Endothelial cell of umbilical vein (primary cell): ENCODE measurements at regions of chr14 and their contacts with region 1.

Region 1: DNA sequence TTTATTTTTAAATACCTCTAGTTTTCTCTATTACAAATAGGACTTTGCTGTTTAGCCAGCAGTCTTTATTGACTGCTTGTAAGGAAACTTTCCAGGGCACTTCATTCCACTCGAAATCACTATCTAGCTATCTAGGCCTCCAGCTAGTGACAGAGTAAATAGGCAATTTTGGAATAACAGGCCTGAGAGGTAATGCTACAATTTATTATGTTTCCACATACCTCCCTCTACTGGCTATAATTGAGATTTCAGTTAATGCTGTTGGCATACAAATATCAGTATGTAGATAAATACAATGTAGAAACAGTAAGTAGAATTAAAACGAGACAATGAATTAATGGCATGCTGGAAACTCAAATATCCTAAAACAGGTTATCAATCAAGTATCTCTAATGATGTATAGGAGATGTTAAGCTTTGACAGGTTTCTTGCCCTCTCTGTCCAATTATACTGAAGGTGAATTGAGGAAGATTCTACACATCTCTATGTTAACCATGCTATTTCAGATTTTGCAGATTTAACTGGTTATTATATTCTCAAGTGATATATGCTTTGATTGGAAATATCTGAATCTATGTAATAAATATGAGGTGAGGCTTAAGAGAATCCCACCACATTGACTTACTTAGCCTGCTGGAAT is 7.2 kb downstream of the DTD2 start:
- DNase-seq: peak; percentile 66
- H3K4me3 ChIP-seq: no peak overlapping the region
- H3K27ac ChIP-seq: no peak overlapping the region
- H3K4me1 ChIP-seq: peaks cover 10% of the 10 kb centered on the region
- H3K27me3 ChIP-seq: no peaks in the 10 kb centered on the region
- CTCF ChIP-seq: peak; percentile 21 to 42
- POLR2A ChIP-seq: no peak

Region 2: DNA sequence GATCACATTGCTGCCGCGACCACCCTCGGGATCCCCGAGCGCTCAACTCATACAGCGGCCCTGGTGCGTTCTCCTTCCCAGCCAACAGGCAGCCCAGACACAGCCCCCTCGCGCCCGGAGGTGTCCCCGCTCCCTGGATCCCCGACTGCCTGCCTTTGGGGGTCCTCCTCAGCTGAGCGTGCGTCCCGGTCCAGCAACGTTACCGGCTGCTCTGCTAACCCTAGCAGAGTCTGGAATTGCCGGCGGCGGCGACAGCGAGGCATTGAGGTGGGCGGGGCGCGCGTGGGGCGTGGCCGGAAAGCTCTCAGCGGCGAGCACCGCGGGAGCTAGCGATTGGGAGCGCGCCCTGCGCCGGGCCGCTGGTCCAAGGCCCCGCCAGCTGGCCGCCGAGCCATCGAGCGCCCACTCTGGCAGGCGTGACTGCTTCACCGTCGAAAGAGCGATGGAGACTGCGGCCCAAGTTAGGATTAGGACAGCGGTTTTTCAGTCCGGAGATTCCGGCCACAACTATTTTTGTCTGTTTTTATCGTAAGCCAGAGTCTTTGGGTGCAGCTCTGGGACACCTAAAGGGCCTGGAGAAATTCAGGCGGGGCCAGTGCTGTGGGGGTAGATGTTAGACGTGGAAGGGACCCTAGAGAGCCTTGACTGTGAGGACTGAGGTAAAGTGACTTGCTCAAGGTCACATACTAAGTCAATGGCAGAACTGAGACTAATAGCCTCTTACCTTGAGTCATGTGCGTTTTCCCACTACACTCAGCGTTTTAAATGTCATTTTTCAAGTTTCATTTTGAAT is 29.6 kb before region 1 on chr14 and contains the start of gene HEATR5A:
- CTCF ChIA-PET with region 1: interaction called, 15 read pairs
- POLR2A ChIA-PET with region 1: interaction called, 14 read pairs
- dilution Hi-C with region 1: no loop called
- intact Hi-C with region 1: no loop called
- DNase-seq: peak; percentile 96
- H3K4me3 ChIP-seq: peak within 1 kb of the TSS; percentile 83 to 86 (median 83)
- H3K27ac ChIP-seq: peak within 1 kb of the TSS; percentile 60
- H3K4me1 ChIP-seq: peaks cover 13% of the 10 kb centered on the region
- H3K27me3 ChIP-seq: no peaks in the 10 kb centered on the region
- CTCF ChIP-seq: peak in 1 of 2 donors; percentile 27
- POLR2A ChIP-seq: peak; percentile 99
- total RNA-seq, gene HEATR5A: 37.0 and 45.3 TPM in 2 replicates

Region 3: DNA sequence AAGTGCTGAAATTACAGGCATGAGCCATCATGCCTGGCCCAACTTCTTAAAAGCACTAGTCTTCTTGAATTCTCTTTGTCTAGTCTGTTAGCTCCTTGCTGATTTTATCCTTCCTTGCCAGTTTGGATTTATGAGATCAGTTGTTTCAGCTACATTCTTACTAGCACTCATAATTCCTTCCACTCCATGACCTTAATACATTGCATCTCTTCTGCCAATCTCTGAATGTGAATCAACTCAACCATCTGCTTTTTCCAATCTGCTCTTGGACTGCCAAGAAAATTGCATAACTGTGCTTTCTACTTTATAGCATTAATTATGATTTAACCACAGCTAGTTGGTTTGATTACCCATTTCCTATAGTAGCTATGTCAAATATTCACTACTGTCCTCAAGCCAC is 14.8 kb before region 1 on chr14:
- CTCF ChIA-PET with region 1: interaction called, 14 read pairs
- POLR2A ChIA-PET with region 1: no interaction called
- dilution Hi-C with region 1: no loop called
- intact Hi-C with region 1: no loop called
- DNase-seq: no peak
- H3K4me3 ChIP-seq: no peak overlapping the region
- H3K27ac ChIP-seq: no peak overlapping the region
- H3K4me1 ChIP-seq: no peaks in the 10 kb centered on the region
- H3K27me3 ChIP-seq: no peaks in the 10 kb centered on the region
- CTCF ChIP-seq: no peak
- POLR2A ChIP-seq: no peak

Region 4: GRCh38 chr14:31596342-31597095 is 146.4 kb after region 1 on chr14:
- CTCF ChIA-PET with region 1: no interaction called
- POLR2A ChIA-PET with region 1: no interaction called
- dilution Hi-C with region 1: no loop called
- intact Hi-C with region 1: no loop called
- DNase-seq: no peak
- H3K4me3 ChIP-seq: no peak overlapping the region
- H3K27ac ChIP-seq: no peak overlapping the region
- H3K4me1 ChIP-seq: no peaks in the 10 kb centered on the region
- H3K27me3 ChIP-seq: no peaks in the 10 kb centered on the region
- CTCF ChIP-seq: no peak
- POLR2A ChIP-seq: no peak